Activated T-helper 2 cell treated with anti-CD3 and anti-CD28 coated beads, Interferon-gamma antibody, Interleukin-2, Interleukin-4, amounts not matched to agents 10 μg/mL and 5 μg/mL and 100 μg/mL, durations not matched to agents 14 hours and 24 hours and 36 hours (primary cell): ENCODE measurements at regions of chr17 and their contacts with region 1.

Region 1: GRCh38 chr17:56913864-56914640 is at the start of gene TRIM25:
- DNase-seq: peak; percentile 77
- H3K4me3 Mint-ChIP-seq: peak within 1 kb of the TSS; percentile 92
- H3K27ac Mint-ChIP-seq: peak within 1 kb of the TSS; percentile 96
- H3K4me1 Mint-ChIP-seq: peaks cover 59% of the 10 kb centered on the region
- H3K27me3 Mint-ChIP-seq: no peaks in the 10 kb centered on the region
- total RNA-seq, gene TRIM25: 76.5 and 85.9 TPM in 2 replicates

Region 2: GRCh38 chr17:56851008-56851407 is 63.0 kb before region 1 on chr17:
- intact Hi-C with region 1: no loop called
- DNase-seq: no peak
- H3K4me3 Mint-ChIP-seq: no peak overlapping the region
- H3K27ac Mint-ChIP-seq: no peak overlapping the region
- H3K4me1 Mint-ChIP-seq: no peaks in the 10 kb centered on the region
- H3K27me3 Mint-ChIP-seq: no peaks in the 10 kb centered on the region

Region 3: GRCh38 chr17:56926701-56927590 is 12.9 kb after region 1 on chr17:
- intact Hi-C with region 1: no loop called
- DNase-seq: no peak
- H3K4me3 Mint-ChIP-seq: no peak overlapping the region
- H3K27ac Mint-ChIP-seq: no peak overlapping the region
- H3K4me1 Mint-ChIP-seq: no peaks in the 10 kb centered on the region
- H3K27me3 Mint-ChIP-seq: no peaks in the 10 kb centered on the region

Region 4: DNA sequence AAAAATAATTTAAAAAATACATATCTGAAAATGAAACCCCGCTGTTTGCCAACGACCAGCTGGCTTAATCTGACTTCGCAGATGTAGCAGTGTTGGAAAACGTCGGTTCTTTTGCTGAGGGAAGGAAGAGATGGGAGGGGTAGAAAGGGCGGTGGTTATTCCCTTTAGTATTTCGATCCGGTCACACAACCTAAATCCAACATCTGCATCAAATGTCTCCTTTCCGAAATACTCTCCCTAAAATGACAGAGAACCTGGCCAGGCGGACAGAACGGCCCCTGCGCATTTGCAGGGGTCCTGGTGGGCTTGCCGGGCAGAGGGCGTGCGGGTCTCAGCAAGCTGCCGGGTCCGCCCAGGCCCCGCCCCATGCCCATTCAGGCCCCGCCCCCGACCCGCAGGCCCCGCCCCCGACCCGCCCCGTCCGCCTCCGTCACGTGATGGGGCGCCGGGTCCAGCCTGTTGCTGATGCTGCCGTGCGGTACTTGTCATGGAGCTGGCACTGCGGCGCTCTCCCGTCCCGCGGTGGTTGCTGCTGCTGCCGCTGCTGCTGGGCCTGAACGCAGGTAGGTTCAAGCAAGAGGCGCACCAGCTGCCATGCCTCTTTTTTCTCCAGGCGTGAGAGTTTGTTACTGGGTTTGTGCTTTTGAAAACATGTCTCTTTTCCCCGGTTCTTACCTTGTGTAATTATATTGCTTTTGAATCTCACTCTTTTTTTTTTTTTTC is 63.8 kb after region 1 on chr17 and contains the start of gene SCPEP1:
- intact Hi-C with region 1: loop called (anchors 5 kb)
- DNase-seq: peak; percentile 75
- H3K4me3 Mint-ChIP-seq: peak within 1 kb of the TSS; percentile 81
- H3K27ac Mint-ChIP-seq: peak within 1 kb of the TSS; percentile 79
- H3K4me1 Mint-ChIP-seq: peaks cover 21% of the 10 kb centered on the region
- H3K27me3 Mint-ChIP-seq: peaks cover 18% of the 10 kb centered on the region
- total RNA-seq, gene SCPEP1: 15.8 and 18.1 TPM in 2 replicates